Upper lobe of right lung (tissue), 1 donor: ENCODE measurements at regions of chr3 and their contacts with region 1.

Region 1: GRCh38 chr3:143951351-143951971 is 20.2 kb upstream of the DIPK2A start:
- DNase-seq: no peak
- ATAC-seq: peak; percentile 54
- H3K4me3 ChIP-seq: no peak overlapping the region
- H3K27ac ChIP-seq: no peak overlapping the region
- H3K4me1 ChIP-seq: no peaks in the 10 kb centered on the region
- H3K27me3 ChIP-seq: no peaks in the 10 kb centered on the region
- CTCF ChIP-seq: peak; percentile 81

Region 2: DNA sequence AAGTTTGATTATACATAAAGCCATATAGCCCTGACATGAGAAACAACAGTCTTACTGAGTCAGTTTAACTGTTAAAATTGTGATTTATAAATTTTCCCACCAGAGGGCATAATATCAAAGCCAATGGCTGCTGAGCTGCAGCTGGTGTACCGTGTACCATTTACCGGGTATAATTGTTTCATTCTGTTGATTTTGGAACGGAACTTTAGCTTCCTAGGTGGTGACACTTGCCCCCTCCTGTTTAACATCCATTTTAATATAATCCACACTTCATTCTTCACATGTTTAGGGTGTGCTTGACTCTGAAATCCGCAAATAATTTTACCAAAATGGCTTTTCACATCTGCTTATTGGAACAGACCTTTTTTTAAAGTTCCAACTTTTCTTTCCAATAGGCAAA is 176.0 kb before region 1 on chr3:
- intact Hi-C with region 1: loop called (anchors 5 kb)
- DNase-seq: no peak
- ATAC-seq: peak; percentile 66
- H3K4me3 ChIP-seq: peak overlapping the region; percentile 9
- H3K27ac ChIP-seq: no peak overlapping the region
- H3K4me1 ChIP-seq: peaks cover 7% of the 10 kb centered on the region
- H3K27me3 ChIP-seq: no peaks in the 10 kb centered on the region
- CTCF ChIP-seq: peak; percentile 64

Region 3: GRCh38 chr3:144162079-144162478 is 210.6 kb after region 1 on chr3:
- intact Hi-C with region 1: no loop called
- DNase-seq: no peak
- ATAC-seq: no peak
- H3K4me3 ChIP-seq: no peak overlapping the region
- H3K27ac ChIP-seq: no peak overlapping the region
- H3K4me1 ChIP-seq: no peaks in the 10 kb centered on the region
- H3K27me3 ChIP-seq: no peaks in the 10 kb centered on the region
- CTCF ChIP-seq: no peak